ENCODE measurements at regions of chr18 and their contacts with region 1.

Region 1: GRCh38 chr18:32349728-32350395 is 120.8 kb downstream of the GAREM1 start:
- DNase-seq: peak in 1 of 2 donors; percentile 79
- ATAC-seq: peak; percentile 88
- H3K4me3 ChIP-seq: no peak overlapping the region
- H3K27ac ChIP-seq: peak overlapping the region in 1 of 2 donors; percentile 36
- H3K4me1 ChIP-seq: peaks cover 2% of the 10 kb centered on the region in 2 donors
- H3K27me3 ChIP-seq: no peaks in the 10 kb centered on the region

Region 2: GRCh38 chr18:32092422-32093101 is 257.3 kb before region 1 on chr18:
- intact Hi-C with region 1: loop called in 1 of 2 experiments (anchors 10 kb)
- DNase-seq: peak; percentile 100
- ATAC-seq: peak; percentile 99
- H3K4me3 ChIP-seq: peak overlapping the region; percentile 51 to 57
- H3K27ac ChIP-seq: peak overlapping the region; percentile 3 to 50
- H3K4me1 ChIP-seq: no peaks in the 10 kb centered on the region
- H3K27me3 ChIP-seq: no peaks in the 10 kb centered on the region

Region 3: DNA sequence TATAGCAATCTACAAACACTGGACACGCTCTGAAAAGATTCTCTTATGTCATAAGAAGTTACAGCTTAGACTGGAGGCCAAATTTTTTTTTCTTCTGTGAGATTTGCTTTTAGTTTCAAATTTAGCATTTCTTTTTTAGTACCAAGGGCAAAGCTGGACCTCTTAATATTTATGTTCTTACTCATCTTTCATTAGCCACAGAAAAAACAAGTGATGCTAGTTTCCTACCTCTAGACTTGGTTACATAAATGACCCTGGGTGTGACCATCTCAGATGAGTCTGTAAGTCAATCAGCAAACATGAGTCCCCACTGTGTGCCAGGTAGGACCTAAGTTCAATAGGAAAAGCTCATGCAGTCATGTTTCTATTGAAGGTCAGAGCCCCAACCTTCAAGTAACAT is 65.6 kb before region 1 on chr18:
- intact Hi-C with region 1: loop called (anchors 2 kb)
- DNase-seq: no peak
- ATAC-seq: peak; percentile 51
- H3K4me3 ChIP-seq: no peak overlapping the region
- H3K27ac ChIP-seq: peak overlapping the region; percentile 33 to 76
- H3K4me1 ChIP-seq: peaks cover 2 to 16% of the 10 kb centered on the region in 2 donors
- H3K27me3 ChIP-seq: no peaks in the 10 kb centered on the region

Region 4: DNA sequence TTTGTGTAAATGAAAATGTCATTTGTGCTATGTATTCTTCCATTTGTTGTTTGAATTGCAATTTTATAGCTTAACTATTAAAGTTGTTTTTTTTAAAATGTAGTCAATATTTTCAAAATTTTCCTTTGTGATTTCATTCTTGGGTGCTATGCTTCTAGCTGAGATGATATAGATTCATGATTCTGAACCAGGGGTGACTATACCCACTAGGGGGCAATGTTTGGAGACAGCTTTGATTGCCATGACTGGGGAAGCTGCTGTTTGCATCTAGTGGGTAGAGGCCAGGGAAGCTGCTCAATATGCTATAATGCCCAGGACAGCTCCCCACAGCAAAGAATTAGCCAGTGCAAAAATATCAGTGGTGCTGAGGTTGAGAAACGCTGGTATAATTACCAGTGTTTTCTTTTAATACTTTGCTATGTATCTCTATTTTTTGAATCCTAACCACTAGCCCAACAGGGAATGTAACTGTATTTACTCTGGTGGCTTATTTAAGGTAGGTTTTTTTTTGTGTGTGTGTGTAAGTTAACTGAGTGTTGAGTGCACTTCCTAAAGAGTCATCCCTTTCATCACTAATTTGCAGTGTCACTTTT is 60.3 kb before region 1 on chr18:
- intact Hi-C with region 1: loop called (anchors 2 kb)
- DNase-seq: no peak
- ATAC-seq: peak; percentile 65
- H3K4me3 ChIP-seq: no peak overlapping the region
- H3K27ac ChIP-seq: no peak overlapping the region
- H3K4me1 ChIP-seq: no peaks in the 10 kb centered on the region
- H3K27me3 ChIP-seq: no peaks in the 10 kb centered on the region

Region 5: DNA sequence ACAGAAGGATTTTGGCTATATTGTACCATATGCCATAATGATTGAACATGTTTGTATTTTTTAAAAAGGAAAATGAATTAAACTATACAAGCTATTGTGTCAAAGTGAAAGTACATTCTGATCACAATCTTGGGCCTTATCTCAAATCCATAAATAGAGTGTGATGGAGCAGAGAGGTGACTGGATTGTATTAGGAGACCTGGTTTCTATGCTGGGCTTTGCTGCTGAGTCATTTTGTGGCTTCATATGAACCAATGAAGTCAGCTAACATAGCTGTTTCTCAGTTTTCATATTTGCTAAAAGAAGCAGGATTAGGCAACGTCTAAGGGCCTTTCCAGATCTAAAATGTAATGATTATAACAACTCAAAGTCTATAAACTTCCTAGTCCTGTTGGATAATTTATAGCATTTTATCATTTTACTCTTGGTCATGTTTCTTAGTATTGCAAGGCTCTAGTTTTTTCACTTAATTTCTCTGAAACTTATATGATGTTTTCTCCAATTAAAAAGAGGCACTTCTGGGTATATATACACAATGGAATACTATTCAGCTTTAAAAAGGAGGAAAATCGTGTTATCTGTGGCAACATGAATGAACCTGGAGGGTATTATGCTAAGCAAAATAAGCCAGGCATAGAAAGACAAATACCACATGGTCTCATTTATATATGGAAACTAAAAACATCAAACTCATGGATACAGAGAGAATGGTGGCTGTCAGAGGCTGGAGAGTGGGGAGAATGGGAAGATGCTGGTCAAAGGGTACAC is 47.7 kb before region 1 on chr18:
- intact Hi-C with region 1: loop called in 1 of 2 experiments (anchors 5 kb)
- DNase-seq: no peak
- ATAC-seq: peak; percentile 80
- H3K4me3 ChIP-seq: no peak overlapping the region
- H3K27ac ChIP-seq: peak overlapping the region; percentile 62 to 100
- H3K4me1 ChIP-seq: peaks cover 8 to 9% of the 10 kb centered on the region in 2 donors
- H3K27me3 ChIP-seq: no peaks in the 10 kb centered on the region

Region 6: GRCh38 chr18:32480581-32480980 is 130.7 kb after region 1 on chr18:
- intact Hi-C with region 1: no loop called
- DNase-seq: no peak
- ATAC-seq: no peak
- H3K4me3 ChIP-seq: no peak overlapping the region
- H3K27ac ChIP-seq: no peak overlapping the region
- H3K4me1 ChIP-seq: no peaks in the 10 kb centered on the region
- H3K27me3 ChIP-seq: no peaks in the 10 kb centered on the region

Region 7: DNA sequence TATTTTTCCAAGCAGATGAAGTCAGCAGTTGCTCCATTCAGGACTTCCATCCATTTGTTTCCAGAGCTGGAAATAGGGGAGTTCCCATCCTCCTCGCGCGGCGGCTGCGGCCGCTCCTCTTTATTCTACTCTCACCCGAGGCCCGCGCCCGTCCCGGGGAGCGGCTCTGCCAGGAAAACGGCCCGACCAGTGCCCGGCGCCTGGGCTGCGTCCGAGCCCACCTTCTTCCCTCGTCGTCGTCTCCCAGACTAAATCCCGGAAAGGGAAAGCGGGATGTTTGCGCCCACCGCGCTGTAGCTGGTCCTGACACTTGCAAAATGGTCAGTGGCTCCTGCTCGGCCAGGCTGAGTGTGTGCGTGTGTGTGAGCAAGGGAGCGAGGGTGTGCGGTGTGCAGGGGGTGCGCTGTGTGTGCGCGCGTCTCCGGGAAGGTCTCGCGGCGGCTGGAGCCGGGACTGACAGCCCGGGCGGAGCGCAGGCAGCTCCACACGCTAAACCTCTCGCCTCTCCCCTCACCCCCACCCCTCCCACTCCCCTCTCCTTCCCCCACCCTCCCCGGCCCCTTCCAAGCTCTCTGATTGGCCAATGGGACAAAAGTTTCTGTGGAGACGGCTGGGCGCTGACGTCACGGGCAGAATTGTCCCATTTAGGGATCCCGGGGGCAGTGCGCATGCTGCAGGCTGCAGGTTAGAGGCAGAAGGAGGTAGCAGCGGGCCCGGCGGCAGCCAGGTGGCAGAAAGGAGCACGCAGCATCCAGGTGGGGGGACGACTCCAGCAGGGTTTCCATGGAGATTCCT is 1874.8 kb after region 1 on chr18 and contains the start of gene NOL4:
- intact Hi-C with region 1: loop called in 1 of 2 experiments (anchors 10 kb)
- DNase-seq: peak; percentile 45 to 87
- ATAC-seq: peak; percentile 64
- H3K4me3 ChIP-seq: peak within 1 kb of the TSS; percentile 59 to 62
- H3K27ac ChIP-seq: no peak within 1 kb of the TSS
- H3K4me1 ChIP-seq: no peaks in the 10 kb centered on the region
- H3K27me3 ChIP-seq: no peaks in the 10 kb centered on the region
- total RNA-seq, gene NOL4: 0.62 TPM in 1 of 2 donors, not detected in the other

Measured in aorta (tissue), 5 donors.